Heart right ventricle (tissue), 16 donors: ENCODE measurements at regions of chr13 and their contacts with region 1.

Region 1: DNA sequence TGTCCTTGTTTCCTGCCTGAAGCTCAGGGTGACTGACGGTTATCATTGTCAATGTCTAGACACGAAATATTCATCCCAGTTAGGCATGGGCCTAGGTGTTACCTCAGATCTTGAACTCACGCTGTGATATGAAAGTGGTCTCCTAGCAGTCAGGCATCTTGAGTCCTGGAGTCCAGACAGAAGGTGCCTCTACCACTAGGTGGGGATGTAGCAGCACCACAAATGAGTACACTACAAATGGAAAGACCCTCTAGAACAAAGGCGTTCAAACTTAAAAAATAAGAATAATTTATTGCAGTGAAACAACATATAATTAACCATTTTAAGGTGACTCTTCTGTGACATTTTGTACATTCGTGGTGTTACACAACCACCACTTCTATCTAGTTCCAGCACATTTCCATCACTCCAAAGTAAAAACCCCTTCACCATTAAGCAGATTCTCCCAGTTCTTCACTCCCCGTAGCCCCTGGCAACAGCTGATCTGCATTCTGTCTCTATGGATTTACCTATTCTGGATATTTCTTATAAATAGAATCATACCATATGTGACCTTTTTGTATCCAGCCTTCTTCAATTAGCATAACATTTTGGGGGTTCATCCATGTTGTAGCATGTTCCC is 11.9 kb upstream of the FRY start:
- DNase-seq: peak in 1 of 2 donors; percentile 58
- ATAC-seq: peak in 6 of 8 donors; percentile 48 to 67 (median 61)
- H3K4me3 ChIP-seq: no peak overlapping the region
- H3K27ac ChIP-seq: no peak overlapping the region
- H3K4me1 ChIP-seq: peaks cover 6 to 65% (median 34%) of the 10 kb centered on the region in 9 donors
- H3K27me3 ChIP-seq: no peaks in the 10 kb centered on the region
- CTCF ChIP-seq: peak; percentile 37 to 87 (median 77)

Region 2: GRCh38 chr13:31824705-31825517 is 194.8 kb before region 1 on chr13:
- intact Hi-C with region 1: loop called in 1 of 10 experiments (anchors 10 kb)
- DNase-seq: peak in 1 of 2 donors; percentile 37
- ATAC-seq: peak; percentile 60 to 79 (median 70)
- H3K4me3 ChIP-seq: no peak overlapping the region
- H3K27ac ChIP-seq: no peak overlapping the region
- H3K4me1 ChIP-seq: peaks cover 0 to 17% (median 0%) of the 10 kb centered on the region in 9 donors
- H3K27me3 ChIP-seq: no peaks in the 10 kb centered on the region
- CTCF ChIP-seq: peak in 7 of 9 donors; percentile 37 to 69 (median 58)

Region 3: GRCh38 chr13:31909864-31910551 is 109.7 kb before region 1 on chr13:
- intact Hi-C with region 1: loop called in 2 of 10 experiments (anchors 10 kb)
- DNase-seq: peak in 1 of 2 donors; percentile 76
- ATAC-seq: peak in 7 of 8 donors; percentile 25 to 70 (median 54)
- H3K4me3 ChIP-seq: no peak overlapping the region
- H3K27ac ChIP-seq: peak overlapping the region in 6 of 10 donors; percentile 29 to 67 (median 34)
- H3K4me1 ChIP-seq: peaks cover 7 to 66% (median 56%) of the 10 kb centered on the region in 9 donors
- H3K27me3 ChIP-seq: no peaks in the 10 kb centered on the region
- CTCF ChIP-seq: peak; percentile 78 to 96 (median 91)

Region 4: DNA sequence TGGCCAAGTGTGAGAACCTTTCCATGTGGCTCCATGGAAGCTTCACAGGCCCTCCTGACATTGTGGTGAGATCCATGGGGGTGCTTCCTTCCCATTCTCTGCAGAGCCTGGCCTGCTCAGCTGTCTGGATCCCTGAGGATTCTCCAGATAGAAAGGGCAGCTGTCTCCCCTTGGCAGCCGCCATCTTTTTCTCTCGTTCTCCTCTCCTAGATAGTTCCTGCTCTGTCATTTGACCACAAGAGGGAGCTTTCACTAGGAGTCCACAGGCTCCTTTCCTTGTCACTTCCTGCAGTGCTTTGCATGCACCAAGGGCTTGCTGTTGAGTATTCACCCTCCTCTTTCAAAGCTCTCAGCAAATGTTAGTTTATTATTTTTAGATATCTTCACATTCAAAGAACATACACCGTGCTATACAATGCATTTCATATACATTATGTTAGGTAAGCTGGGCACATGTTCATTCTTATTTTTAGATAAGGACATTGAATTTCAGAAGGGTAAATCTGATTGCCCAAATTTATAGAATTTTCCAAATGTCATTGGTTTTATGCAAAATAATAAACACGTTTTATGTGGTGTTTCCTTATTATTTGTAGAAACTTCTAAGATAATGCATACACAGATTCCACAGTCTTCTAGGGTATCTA is 145.0 kb after region 1 on chr13:
- intact Hi-C with region 1: loop called in 3 of 10 experiments (anchors 5 to 10 kb)
- DNase-seq: no peak
- ATAC-seq: peak in 5 of 8 donors; percentile 19 to 48 (median 33)
- H3K4me3 ChIP-seq: no peak overlapping the region
- H3K27ac ChIP-seq: peak overlapping the region in 8 of 10 donors; percentile 24 to 85 (median 76)
- H3K4me1 ChIP-seq: peaks cover 7 to 90% (median 39%) of the 10 kb centered on the region in 9 donors
- H3K27me3 ChIP-seq: no peaks in the 10 kb centered on the region
- CTCF ChIP-seq: peak in 7 of 9 donors; percentile 41 to 61 (median 48)

Region 5: DNA sequence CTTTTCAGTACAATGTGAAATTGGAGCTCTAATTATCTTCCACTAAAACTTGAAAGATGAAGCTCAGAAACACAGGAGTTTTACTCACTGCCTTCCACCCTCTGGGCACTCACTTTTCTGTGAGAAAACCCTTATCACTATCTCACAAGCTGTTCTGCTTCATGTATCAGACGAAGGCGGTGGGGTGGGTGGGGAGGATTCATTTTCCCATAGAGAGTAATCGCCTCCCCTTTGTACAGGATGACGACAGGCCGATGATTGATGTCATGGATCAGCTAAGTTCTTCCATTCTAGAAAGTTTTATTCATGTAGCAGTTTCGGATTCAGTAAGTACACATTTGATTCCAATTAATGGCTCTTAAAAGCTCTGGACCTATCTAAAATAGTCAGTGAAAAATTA is 155.6 kb after region 1 on chr13:
- intact Hi-C with region 1: loop called in 1 of 10 experiments (anchors 10 kb)
- DNase-seq: no peak
- ATAC-seq: peak in 2 of 8 donors; percentile 53 to 63
- H3K4me3 ChIP-seq: no peak overlapping the region
- H3K27ac ChIP-seq: no peak overlapping the region
- H3K4me1 ChIP-seq: peaks cover 0 to 7% (median 0%) of the 10 kb centered on the region in 9 donors
- H3K27me3 ChIP-seq: no peaks in the 10 kb centered on the region
- CTCF ChIP-seq: no peak

Region 6: DNA sequence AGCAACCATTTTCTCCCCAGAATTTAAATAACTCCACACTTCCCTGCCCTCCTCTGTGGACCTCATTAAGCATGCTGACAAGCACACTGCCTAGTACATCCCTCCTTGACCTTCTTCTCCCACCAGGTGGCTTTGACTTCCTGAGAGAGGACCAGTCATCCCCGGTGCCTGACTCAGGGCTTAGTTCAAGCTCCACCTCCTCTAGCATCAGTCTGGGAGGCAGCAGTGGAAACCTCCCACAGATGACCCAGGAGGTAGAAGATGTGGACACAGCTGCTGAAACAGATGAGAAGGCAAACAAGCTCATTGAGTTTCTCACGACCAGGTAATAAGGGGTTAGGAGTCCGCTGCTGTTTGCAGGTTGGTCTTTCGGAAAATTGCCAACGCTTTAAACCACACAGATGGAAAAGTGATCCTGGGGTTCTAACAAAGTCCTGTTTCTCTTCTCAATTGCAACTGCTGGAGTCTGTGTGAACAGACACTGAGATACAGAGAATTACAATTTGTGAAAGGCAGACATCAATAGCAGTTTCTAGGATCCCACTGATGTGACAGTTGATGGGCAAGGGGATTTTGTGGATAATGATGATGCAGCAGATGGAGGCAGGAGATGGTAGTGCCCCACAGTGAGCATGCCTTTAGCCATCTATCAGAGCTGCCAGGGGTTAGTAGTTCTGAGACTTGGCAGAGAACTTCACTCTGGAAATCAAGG is 208.8 kb after region 1 on chr13:
- intact Hi-C with region 1: loop called in 1 of 10 experiments (anchors 10 kb)
- DNase-seq: no peak
- ATAC-seq: no peak
- H3K4me3 ChIP-seq: no peak overlapping the region
- H3K27ac ChIP-seq: no peak overlapping the region
- H3K4me1 ChIP-seq: peaks cover 0 to 30% (median 12%) of the 10 kb centered on the region in 9 donors
- H3K27me3 ChIP-seq: no peaks in the 10 kb centered on the region
- CTCF ChIP-seq: no peak

Region 7: GRCh38 chr13:32310134-32310706 is 290.5 kb after region 1 on chr13:
- intact Hi-C with region 1: loop called in 8 of 10 experiments (anchors 2 to 10 kb)
- DNase-seq: peak in 1 of 2 donors; percentile 13
- ATAC-seq: peak; percentile 66 to 84 (median 75)
- H3K4me3 ChIP-seq: peak overlapping the region in 7 of 10 donors; percentile 9 to 39 (median 33)
- H3K27ac ChIP-seq: peak overlapping the region in 3 of 10 donors; percentile 17 to 42 (median 23)
- H3K4me1 ChIP-seq: peaks cover 0 to 23% (median 9%) of the 10 kb centered on the region in 9 donors
- H3K27me3 ChIP-seq: no peaks in the 10 kb centered on the region
- CTCF ChIP-seq: peak; percentile 65 to 85 (median 76)